CD8-positive, alpha-beta T cell (primary cell): ENCODE measurements at regions of chr17 and their contacts with region 1.

Region 1: DNA sequence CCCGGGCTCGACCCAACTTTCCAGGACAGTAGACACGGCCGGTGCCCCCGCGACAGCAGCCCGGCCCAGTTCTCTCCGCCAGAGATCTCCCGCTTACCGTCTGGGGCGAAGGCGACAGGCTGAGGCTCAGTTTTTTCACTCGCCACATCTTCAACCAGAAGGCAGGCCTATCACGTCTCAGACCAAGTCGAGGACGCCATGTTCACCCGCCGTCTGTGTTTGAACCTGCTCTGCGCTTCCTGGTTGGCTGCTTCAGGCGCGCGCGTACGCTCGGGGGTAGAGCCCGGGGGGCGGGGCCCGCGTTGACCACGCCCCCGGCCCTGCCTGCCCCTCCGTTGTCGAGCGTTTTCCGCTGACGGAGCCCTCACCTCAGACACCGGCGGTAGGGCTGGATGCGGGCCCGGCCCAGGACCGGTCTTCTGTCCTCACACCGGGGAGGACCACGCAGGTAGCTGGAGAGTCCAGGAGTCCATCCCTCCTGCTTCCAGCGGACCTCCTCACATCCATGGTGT is at the start of gene SPAG5:
- DNase-seq: peak; percentile 90 to 97 (median 94)
- ATAC-seq: peak; percentile 91
- H3K4me3 ChIP-seq: peak within 1 kb of the TSS; percentile 86 to 89
- H3K4me3 Mint-ChIP-seq: peak within 1 kb of the TSS; percentile 89
- H3K27ac ChIP-seq: peak within 1 kb of the TSS; percentile 96 to 99
- H3K27ac Mint-ChIP-seq: peak within 1 kb of the TSS; percentile 99
- H3K4me1 ChIP-seq: peaks cover 13% of the 10 kb centered on the region
- H3K4me1 Mint-ChIP-seq: peaks cover 19% of the 10 kb centered on the region
- H3K27me3 ChIP-seq: no peaks in the 10 kb centered on the region
- H3K27me3 Mint-ChIP-seq: no peaks in the 10 kb centered on the region
- CTCF ChIP-seq: no peak
- total RNA-seq, gene SPAG5: 23.1 to 26.6 TPM

Region 2: GRCh38 chr17:28494445-28495188 is 104.2 kb before region 1 on chr17:
- CTCF ChIA-PET with region 1: interaction called, 3 read pairs
- POLR2A ChIA-PET with region 1: no interaction called
- intact Hi-C with region 1: loop called in 1 of 2 experiments (anchors 5 kb)
- DNase-seq: peak; percentile 60 to 88 (median 79)
- ATAC-seq: peak; percentile 91
- H3K4me3 ChIP-seq: no peak overlapping the region
- H3K4me3 Mint-ChIP-seq: no peak overlapping the region
- H3K27ac ChIP-seq: no peak overlapping the region
- H3K27ac Mint-ChIP-seq: no peak overlapping the region
- H3K4me1 ChIP-seq: no peaks in the 10 kb centered on the region
- H3K4me1 Mint-ChIP-seq: no peaks in the 10 kb centered on the region
- H3K27me3 ChIP-seq: no peaks in the 10 kb centered on the region
- H3K27me3 Mint-ChIP-seq: peaks cover 4% of the 10 kb centered on the region
- CTCF ChIP-seq: peak; percentile 71

Region 3: DNA sequence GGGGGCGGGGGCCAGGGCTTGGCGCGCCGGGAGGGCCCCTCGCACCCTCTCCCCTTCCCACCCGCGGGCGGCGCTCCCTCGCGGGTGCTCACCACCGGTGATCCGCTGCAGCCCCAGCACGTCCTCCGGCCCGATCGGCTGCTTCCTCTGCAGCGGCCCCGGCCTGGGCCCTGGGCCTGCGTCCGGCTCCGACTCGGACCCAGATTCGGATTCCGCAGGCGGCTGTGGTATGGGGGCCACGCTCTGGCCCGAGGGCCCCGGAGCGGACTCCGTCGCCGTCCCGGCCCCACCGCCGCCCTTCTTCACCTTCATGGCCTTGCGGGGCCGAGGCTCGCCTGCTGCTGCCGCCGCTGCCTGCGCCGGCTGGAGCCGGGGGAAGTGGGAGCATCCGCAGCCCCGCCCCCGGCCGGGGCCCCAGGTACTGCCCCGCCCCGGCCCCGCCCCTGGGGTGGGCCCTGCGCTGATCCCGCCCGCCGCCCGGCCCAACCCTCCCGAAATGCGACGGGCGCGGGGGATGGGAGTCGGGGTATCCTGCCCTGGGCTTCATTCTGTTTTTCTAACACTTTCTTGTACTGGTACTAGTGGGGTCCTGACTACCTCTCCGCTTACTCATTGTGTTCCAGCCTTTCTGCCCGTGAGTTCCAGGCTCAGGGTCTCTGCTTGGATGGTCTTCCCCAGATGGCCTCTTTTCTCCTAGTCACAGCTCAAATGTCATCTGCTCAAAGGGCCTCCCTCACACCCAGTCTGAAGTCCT is 46.4 kb before region 1 on chr17 and contains the start of gene UNC119:
- CTCF ChIA-PET with region 1: interaction called, 3 read pairs
- POLR2A ChIA-PET with region 1: interaction called, 4 read pairs
- intact Hi-C with region 1: loop called (anchors 1 kb)
- DNase-seq: peak; percentile 48 to 88 (median 76)
- ATAC-seq: peak; percentile 80
- H3K4me3 ChIP-seq: peak within 1 kb of the TSS; percentile 47 to 48
- H3K4me3 Mint-ChIP-seq: peak within 1 kb of the TSS; percentile 90
- H3K27ac ChIP-seq: peak within 1 kb of the TSS in 1 of 2 experiments; percentile 10
- H3K27ac Mint-ChIP-seq: peak within 1 kb of the TSS; percentile 86
- H3K4me1 ChIP-seq: peaks cover 53% of the 10 kb centered on the region
- H3K4me1 Mint-ChIP-seq: peaks cover 50% of the 10 kb centered on the region
- H3K27me3 ChIP-seq: no peaks in the 10 kb centered on the region
- H3K27me3 Mint-ChIP-seq: no peaks in the 10 kb centered on the region
- CTCF ChIP-seq: no peak
- total RNA-seq, gene UNC119: 48.9 to 49.9 TPM

Region 4: DNA sequence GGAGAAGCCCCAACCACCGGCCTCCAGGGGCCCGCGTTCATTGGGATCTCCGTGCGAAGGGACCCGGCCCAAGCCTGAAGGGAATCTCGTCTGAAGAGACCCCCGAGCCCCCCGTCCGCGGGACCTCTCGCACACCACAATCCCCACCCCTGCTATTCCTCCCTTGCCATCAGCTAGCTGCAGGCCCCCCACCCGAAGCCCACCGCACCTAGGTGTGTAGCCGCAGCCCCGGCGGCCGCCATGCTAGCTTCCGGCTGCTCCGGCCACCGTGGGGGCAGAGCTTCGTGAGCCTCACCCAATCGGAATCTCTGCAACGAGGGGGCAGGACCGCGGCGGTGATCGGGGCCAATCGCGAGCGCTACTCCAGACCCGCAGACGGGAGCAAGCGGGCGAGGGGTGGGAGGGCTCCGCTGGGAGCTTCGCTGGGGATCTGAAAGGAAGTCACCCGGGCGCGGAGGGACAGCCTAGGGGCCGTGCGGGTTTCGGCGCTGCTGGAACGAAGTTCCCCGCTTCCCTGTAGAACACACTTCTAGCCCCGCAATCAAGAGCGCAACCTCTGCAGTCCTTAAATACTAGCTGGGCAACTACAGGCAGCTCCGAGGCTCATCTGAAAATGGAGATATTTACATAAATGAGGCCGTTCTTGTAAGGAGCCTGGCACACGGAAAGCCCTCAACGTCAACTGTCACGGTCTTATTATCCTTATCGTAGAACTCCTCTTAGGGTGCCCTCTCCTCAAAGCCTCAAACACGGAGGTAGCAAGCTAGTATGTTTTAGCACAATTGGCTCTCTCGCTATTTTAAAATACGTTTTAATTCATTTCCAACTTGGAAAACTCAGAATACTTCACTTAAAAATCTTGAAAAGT is 27.4 kb before region 1 on chr17 and contains the start of gene PIGS:
- CTCF ChIA-PET with region 1: no interaction called
- POLR2A ChIA-PET with region 1: interaction called, 22 read pairs
- intact Hi-C with region 1: loop called (anchors 1 kb)
- DNase-seq: peak; percentile 74 to 94 (median 90)
- ATAC-seq: peak; percentile 95
- H3K4me3 ChIP-seq: peak within 1 kb of the TSS; percentile 98 to 100
- H3K4me3 Mint-ChIP-seq: peak within 1 kb of the TSS; percentile 97
- H3K27ac ChIP-seq: peak within 1 kb of the TSS; percentile 69 to 92
- H3K27ac Mint-ChIP-seq: peak within 1 kb of the TSS; percentile 96
- H3K4me1 ChIP-seq: peaks cover 45% of the 10 kb centered on the region
- H3K4me1 Mint-ChIP-seq: peaks cover 69% of the 10 kb centered on the region
- H3K27me3 ChIP-seq: no peaks in the 10 kb centered on the region
- H3K27me3 Mint-ChIP-seq: no peaks in the 10 kb centered on the region
- CTCF ChIP-seq: no peak
- total RNA-seq, gene PIGS: 46.2 to 60.0 TPM

Region 5: GRCh38 chr17:28576758-28577465 is 21.9 kb before region 1 on chr17 and contains the start of gene ALDOC:
- CTCF ChIA-PET with region 1: no interaction called
- POLR2A ChIA-PET with region 1: interaction called, 22 read pairs
- intact Hi-C with region 1: loop called (anchors 1 kb)
- DNase-seq: peak; percentile 95 to 99 (median 99)
- ATAC-seq: peak; percentile 99
- H3K4me3 ChIP-seq: peak within 1 kb of the TSS; percentile 36 to 40
- H3K4me3 Mint-ChIP-seq: peak within 1 kb of the TSS; percentile 81
- H3K27ac ChIP-seq: peak within 1 kb of the TSS; percentile 17 to 62
- H3K27ac Mint-ChIP-seq: peak within 1 kb of the TSS; percentile 92
- H3K4me1 ChIP-seq: peaks cover 28% of the 10 kb centered on the region
- H3K4me1 Mint-ChIP-seq: peaks cover 42% of the 10 kb centered on the region
- H3K27me3 ChIP-seq: no peaks in the 10 kb centered on the region
- H3K27me3 Mint-ChIP-seq: no peaks in the 10 kb centered on the region
- CTCF ChIP-seq: no peak
- total RNA-seq, gene ALDOC: 16.3 to 16.5 TPM

Region 6: GRCh38 chr17:28612936-28613872 is 14.3 kb after region 1 on chr17:
- CTCF ChIA-PET with region 1: interaction called, 6 read pairs
- POLR2A ChIA-PET with region 1: interaction called, 6 read pairs
- intact Hi-C with region 1: loop called in 1 of 2 experiments (anchors 1 kb)
- DNase-seq: peak in 8 of 9 experiments; percentile 7 to 62 (median 44)
- ATAC-seq: peak; percentile 57
- H3K4me3 ChIP-seq: no peak overlapping the region
- H3K4me3 Mint-ChIP-seq: no peak overlapping the region
- H3K27ac ChIP-seq: no peak overlapping the region
- H3K27ac Mint-ChIP-seq: no peak overlapping the region
- H3K4me1 ChIP-seq: no peaks in the 10 kb centered on the region
- H3K4me1 Mint-ChIP-seq: peaks cover 3% of the 10 kb centered on the region
- H3K27me3 ChIP-seq: no peaks in the 10 kb centered on the region
- H3K27me3 Mint-ChIP-seq: no peaks in the 10 kb centered on the region
- CTCF ChIP-seq: peak; percentile 74

Region 7: GRCh38 chr17:28661635-28662537 is 63.0 kb after region 1 on chr17 and contains the starts of genes SDF2 and SUPT6H:
- CTCF ChIA-PET with region 1: no interaction called
- POLR2A ChIA-PET with region 1: interaction called, 7 read pairs
- intact Hi-C with region 1: loop called in 1 of 2 experiments (anchors 5 kb)
- DNase-seq: peak; percentile 83 to 97 (median 96)
- ATAC-seq: peak; percentile 85
- H3K4me3 ChIP-seq: peak within 1 kb of the TSS; percentile 91 to 94
- H3K4me3 Mint-ChIP-seq: peak within 1 kb of the TSS; percentile 98
- H3K27ac ChIP-seq: peak within 1 kb of the TSS; percentile 98 to 99
- H3K27ac Mint-ChIP-seq: peak within 1 kb of the TSS; percentile 99
- H3K4me1 ChIP-seq: peaks cover 43% of the 10 kb centered on the region
- H3K4me1 Mint-ChIP-seq: peaks cover 60% of the 10 kb centered on the region
- H3K27me3 ChIP-seq: no peaks in the 10 kb centered on the region
- H3K27me3 Mint-ChIP-seq: no peaks in the 10 kb centered on the region
- CTCF ChIP-seq: peak; percentile 20
- total RNA-seq, gene SDF2: 30.4 to 38.3 TPM
- total RNA-seq, gene SUPT6H: 163 to 169 TPM

Region 8: GRCh38 chr17:29180034-29180787 is 581.4 kb after region 1 on chr17 and contains the start of gene MYO18A:
- CTCF ChIA-PET with region 1: no interaction called
- POLR2A ChIA-PET with region 1: no interaction called
- intact Hi-C with region 1: no loop called
- DNase-seq: peak; percentile 64 to 89 (median 78)
- ATAC-seq: peak; percentile 94
- H3K4me3 ChIP-seq: peak within 1 kb of the TSS; percentile 20 to 26
- H3K4me3 Mint-ChIP-seq: peak within 1 kb of the TSS; percentile 68
- H3K27ac ChIP-seq: peak within 1 kb of the TSS in 1 of 2 experiments; percentile 5
- H3K27ac Mint-ChIP-seq: no peak within 1 kb of the TSS
- H3K4me1 ChIP-seq: peaks cover 22% of the 10 kb centered on the region
- H3K4me1 Mint-ChIP-seq: peaks cover 20% of the 10 kb centered on the region
- H3K27me3 ChIP-seq: no peaks in the 10 kb centered on the region
- H3K27me3 Mint-ChIP-seq: no peaks in the 10 kb centered on the region
- CTCF ChIP-seq: peak; percentile 86
- total RNA-seq, gene MYO18A: 48.5 to 52.9 TPM